ENCODE measurements at regions of chr14 and their contacts with region 1.

Region 1: GRCh38 chr14:22570132-22570949 is 18.7 kb downstream of the DAD1 start:
- DNase-seq: peak; percentile 63 to 98 (median 80)
- ATAC-seq: peak; percentile 85
- H3K4me3 ChIP-seq: peak overlapping the region; percentile 45
- H3K4me3 Mint-ChIP-seq: peak overlapping the region; percentile 73
- H3K27ac ChIP-seq: peak overlapping the region; percentile 79 to 92
- H3K27ac Mint-ChIP-seq: peak overlapping the region; percentile 97
- H3K4me1 ChIP-seq: peaks cover 43% of the 10 kb centered on the region
- H3K4me1 Mint-ChIP-seq: peaks cover 71% of the 10 kb centered on the region
- H3K27me3 ChIP-seq: no peaks in the 10 kb centered on the region
- H3K27me3 Mint-ChIP-seq: no peaks in the 10 kb centered on the region
- CTCF ChIP-seq: peak; percentile 92

Region 2: DNA sequence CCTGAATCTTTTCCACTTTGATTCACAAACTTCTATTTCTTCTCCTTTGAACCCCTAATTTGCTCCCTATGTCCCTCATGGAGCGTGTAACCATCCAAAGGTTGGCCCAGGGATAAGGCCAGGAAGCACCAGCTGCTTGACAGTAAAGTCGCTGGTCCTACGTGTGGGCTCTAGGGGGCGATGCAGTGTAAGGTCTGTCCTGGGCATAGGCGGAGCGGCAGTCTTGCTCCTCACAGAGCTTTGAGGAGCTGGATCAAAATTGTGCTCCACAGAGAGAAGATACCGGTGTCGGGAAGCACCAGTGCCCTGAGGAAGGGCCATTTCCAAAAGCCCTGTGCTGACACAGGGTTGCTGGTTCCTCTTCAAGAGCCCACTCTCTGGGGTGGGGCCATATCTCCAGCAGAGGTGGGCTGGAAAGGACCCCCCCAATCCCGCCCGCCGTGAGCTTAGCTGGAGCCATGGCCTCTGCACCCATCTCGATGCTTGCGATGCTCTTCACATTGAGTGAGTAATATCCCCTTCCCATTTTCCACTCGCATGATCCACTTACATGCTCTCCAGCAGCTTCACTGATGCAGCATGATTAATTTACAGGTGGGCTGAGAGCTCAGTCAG is 846.8 kb before region 1 on chr14:
- CTCF ChIA-PET with region 1: interaction called, 11 read pairs
- POLR2A ChIA-PET with region 1: interaction called, 7 read pairs
- intact Hi-C with region 1: no loop called
- DNase-seq: peak in 11 of 14 experiments; percentile 18 to 72 (median 32)
- ATAC-seq: peak; percentile 82
- H3K4me3 ChIP-seq: peak overlapping the region; percentile 44
- H3K4me3 Mint-ChIP-seq: peak overlapping the region; percentile 85
- H3K27ac ChIP-seq: no peak overlapping the region
- H3K27ac Mint-ChIP-seq: peak overlapping the region; percentile 75
- H3K4me1 ChIP-seq: no peaks in the 10 kb centered on the region
- H3K4me1 Mint-ChIP-seq: no peaks in the 10 kb centered on the region
- H3K27me3 ChIP-seq: peaks cover 0 to 5% of the 10 kb centered on the region in 2 experiments
- H3K27me3 Mint-ChIP-seq: peaks cover 51% of the 10 kb centered on the region
- CTCF ChIP-seq: peak; percentile 32

Region 3: DNA sequence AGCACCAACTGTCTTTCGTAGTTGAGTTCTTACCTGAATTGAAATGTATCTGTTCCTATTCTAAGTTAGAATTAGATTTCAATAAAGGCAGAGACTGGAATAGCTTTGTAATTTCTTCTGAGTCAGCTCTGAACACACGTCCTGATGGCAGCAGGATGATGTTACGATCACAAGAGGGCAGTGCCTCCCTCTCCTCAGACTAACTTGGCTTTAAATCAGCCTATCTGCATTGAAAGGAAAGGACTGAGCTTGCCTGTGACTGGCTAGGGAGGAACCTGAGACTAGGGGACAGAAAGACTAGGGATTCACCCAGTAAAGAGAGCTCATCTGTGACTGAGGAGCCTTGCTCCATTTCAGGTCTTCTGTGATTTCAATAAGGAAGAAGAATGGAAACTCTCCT is 573.0 kb before region 1 on chr14:
- CTCF ChIA-PET with region 1: interaction called, 15 read pairs
- POLR2A ChIA-PET with region 1: interaction called, 10 read pairs
- intact Hi-C with region 1: no loop called
- DNase-seq: peak in 7 of 14 experiments; percentile 16 to 77 (median 47)
- ATAC-seq: peak; percentile 90
- H3K4me3 ChIP-seq: peak overlapping the region; percentile 56
- H3K4me3 Mint-ChIP-seq: peak overlapping the region; percentile 95
- H3K27ac ChIP-seq: no peak overlapping the region
- H3K27ac Mint-ChIP-seq: peak overlapping the region; percentile 88
- H3K4me1 ChIP-seq: peaks cover under 1% of the 10 kb centered on the region
- H3K4me1 Mint-ChIP-seq: peaks cover 27% of the 10 kb centered on the region
- H3K27me3 ChIP-seq: no peaks in the 10 kb centered on the region
- H3K27me3 Mint-ChIP-seq: no peaks in the 10 kb centered on the region
- CTCF ChIP-seq: no peak

Region 4: DNA sequence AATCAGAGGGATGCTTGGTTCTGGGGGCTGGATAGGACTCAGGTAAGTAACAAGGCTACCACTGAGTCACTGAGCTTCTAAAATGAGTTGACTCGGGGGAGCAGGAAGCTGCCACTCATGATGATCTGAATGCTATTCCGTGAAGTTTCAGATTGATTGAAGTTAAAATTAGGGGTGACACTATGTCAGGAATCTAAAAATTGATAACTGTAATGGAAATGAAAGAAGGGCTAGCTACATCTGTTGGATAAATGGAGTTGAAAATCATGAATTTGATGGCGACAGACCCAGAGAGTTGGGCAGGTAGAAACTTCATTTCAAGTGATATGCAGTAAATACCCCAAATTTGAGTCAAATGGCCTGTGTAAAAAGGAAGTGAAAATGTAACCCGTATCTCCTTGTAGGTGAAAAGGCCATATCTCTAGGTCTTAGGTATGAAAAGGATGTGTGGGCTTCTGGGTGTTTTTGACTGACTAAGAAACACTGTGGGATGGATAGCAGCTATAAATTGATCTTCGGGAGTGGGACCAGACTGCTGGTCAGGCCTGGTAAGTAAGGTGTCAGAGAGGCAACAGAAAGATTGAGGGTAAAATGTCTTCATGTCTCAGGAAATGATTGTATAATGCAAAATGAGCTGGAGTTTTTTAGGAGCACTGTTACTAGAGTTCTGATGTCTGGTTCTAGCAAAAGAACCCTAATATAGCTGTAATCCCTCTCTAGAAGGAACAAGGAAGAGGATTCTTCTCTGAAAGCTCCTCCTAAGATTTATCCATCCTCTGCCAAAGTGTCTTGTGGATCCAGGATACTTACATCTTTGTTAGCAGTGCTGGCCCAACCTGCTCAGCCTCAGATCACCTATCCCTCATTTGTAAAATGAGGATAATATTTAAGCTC is 38.6 kb before region 1 on chr14:
- CTCF ChIA-PET with region 1: interaction called, 33 read pairs
- POLR2A ChIA-PET with region 1: interaction called, 97 read pairs
- intact Hi-C with region 1: no loop called
- DNase-seq: peak in 3 of 14 experiments; percentile 45 to 73 (median 48)
- ATAC-seq: peak; percentile 51
- H3K4me3 ChIP-seq: peak overlapping the region; percentile 61
- H3K4me3 Mint-ChIP-seq: peak overlapping the region; percentile 86
- H3K27ac ChIP-seq: peak overlapping the region; percentile 52 to 99
- H3K27ac Mint-ChIP-seq: peak overlapping the region; percentile 93
- H3K4me1 ChIP-seq: peaks cover 79% of the 10 kb centered on the region
- H3K4me1 Mint-ChIP-seq: peaks cover 95% of the 10 kb centered on the region
- H3K27me3 ChIP-seq: no peaks in the 10 kb centered on the region
- H3K27me3 Mint-ChIP-seq: no peaks in the 10 kb centered on the region
- CTCF ChIP-seq: no peak

Region 5: GRCh38 chr14:22644305-22644635 is 73.9 kb after region 1 on chr14 and contains the start of gene OR6J1:
- CTCF ChIA-PET with region 1: interaction called, 10 read pairs
- POLR2A ChIA-PET with region 1: interaction called, 4 read pairs
- intact Hi-C with region 1: loop called in 1 of 2 experiments (anchors 1 kb)
- DNase-seq: no peak
- ATAC-seq: no peak
- H3K4me3 ChIP-seq: no peak within 1 kb of the TSS
- H3K4me3 Mint-ChIP-seq: no peak within 1 kb of the TSS
- H3K27ac ChIP-seq: no peak within 1 kb of the TSS
- H3K27ac Mint-ChIP-seq: no peak within 1 kb of the TSS
- H3K4me1 ChIP-seq: peaks cover 2% of the 10 kb centered on the region
- H3K4me1 Mint-ChIP-seq: no peaks in the 10 kb centered on the region
- H3K27me3 ChIP-seq: no peaks in the 10 kb centered on the region
- H3K27me3 Mint-ChIP-seq: no peaks in the 10 kb centered on the region
- CTCF ChIP-seq: no peak
- total RNA-seq, gene OR6J1: not detected

Region 6: GRCh38 chr14:22872033-22872832 is 301.9 kb after region 1 on chr14:
- CTCF ChIA-PET with region 1: interaction called, 15 read pairs
- POLR2A ChIA-PET with region 1: interaction called, 9 read pairs
- intact Hi-C with region 1: no loop called
- DNase-seq: peak; percentile 51 to 84 (median 68)
- ATAC-seq: peak; percentile 35
- H3K4me3 ChIP-seq: peak overlapping the region; percentile 94
- H3K4me3 Mint-ChIP-seq: peak overlapping the region; percentile 93
- H3K27ac ChIP-seq: peak overlapping the region; percentile 93 to 98
- H3K27ac Mint-ChIP-seq: peak overlapping the region; percentile 87
- H3K4me1 ChIP-seq: peaks cover 62% of the 10 kb centered on the region
- H3K4me1 Mint-ChIP-seq: peaks cover 39% of the 10 kb centered on the region
- H3K27me3 ChIP-seq: no peaks in the 10 kb centered on the region
- H3K27me3 Mint-ChIP-seq: no peaks in the 10 kb centered on the region
- CTCF ChIP-seq: peak; percentile 93